Posterior vena cava (tissue), 2 donors: ENCODE measurements at regions of chr17 and their contacts with region 1.

Region 1: DNA sequence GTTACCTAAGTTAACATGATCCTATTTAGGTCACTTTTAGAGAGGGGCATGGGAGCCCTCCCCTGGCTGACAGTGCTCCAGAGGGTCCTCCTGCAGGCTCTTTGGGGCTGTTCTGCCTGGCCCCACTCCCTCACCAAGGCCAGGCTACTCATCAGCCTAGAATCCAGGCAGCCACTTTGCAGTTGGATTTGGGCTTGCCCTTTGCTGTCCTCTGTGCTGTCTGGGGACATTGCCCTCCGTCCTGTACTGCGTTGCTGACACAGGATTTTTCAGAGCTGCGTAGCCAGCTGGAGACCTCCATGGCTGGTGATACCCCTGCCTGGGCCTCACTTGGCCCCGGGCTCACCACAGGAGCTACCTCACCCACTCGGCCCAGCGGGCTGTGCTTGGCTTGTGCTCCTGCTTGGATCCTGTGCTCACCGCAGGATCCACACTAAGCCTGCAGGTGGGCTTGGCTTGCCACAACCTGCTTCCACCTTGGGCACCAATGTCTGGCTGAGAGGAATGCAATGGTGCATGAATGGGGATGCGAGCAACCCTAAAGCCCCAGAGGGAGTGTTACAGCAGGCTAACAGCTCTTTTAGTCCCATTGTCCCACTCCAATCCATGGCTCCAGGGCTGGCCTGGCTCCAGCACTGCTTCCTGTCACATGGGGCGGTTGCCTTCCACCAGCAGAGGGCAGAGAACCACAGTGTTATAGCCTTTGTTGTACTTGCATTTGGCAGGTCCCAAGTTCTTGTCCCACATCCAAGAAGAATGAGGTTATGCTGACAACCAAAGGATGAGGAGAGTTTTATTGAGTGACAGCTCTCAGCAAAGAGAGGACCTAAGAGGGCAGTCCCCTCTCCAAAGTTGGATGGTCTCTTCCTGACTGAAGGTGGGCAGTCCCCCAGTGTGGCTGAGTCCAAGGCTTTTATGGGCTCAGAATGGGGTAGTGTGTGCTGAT is 21.5 kb downstream of the CCL4 start:
- DNase-seq: no peak

Region 2: DNA sequence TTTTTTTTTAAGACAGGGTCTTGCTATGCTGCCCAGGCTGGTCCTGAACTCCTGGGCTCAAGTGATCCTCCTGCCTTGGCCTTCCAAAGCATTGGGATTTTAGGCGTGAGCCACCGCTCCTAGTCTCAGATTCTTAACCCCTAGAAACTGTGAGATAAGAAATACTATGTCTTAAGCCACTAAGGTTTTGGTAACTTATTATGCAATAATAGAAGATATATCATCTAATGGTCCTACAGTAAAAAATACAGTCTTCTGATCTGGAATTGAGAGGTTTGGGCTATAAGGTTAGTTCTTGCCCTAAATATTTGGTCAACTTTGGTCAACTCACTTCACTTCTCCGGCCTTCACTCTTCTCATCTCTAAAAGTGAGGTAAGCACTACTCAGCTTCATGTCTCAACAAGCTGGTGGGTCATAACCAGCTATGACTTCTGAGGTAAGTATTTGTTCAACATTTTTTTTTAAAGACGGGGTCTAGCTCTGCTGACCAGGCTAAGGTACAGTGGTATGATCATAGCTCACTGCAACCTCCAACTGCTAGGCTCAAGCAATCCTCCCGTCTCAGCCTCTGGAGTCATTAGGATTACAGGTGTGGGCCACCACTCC is 1020.2 kb before region 1 on chr17:
- intact Hi-C with region 1: no loop called
- DNase-seq: no peak

Region 3: DNA sequence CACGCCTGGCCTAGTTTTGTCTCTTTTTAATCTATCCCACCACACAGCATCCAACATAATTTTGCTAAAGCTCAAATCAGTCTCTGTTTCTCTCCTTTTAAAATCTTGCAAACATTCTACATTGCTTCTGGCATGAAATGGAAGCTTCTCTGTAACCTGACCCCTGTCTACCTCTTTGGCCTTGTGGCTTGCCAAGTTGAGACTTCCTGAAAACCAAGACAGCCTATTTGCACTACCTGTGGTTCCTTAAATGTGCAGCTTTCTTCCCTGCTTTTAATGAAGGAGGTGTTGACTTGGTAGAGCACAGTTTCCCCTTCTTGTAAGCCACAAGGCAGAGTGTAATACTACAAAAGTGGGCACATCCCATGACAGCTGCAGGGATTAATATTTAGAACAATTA is 29.2 kb before region 1 on chr17:
- intact Hi-C with region 1: loop called in 1 of 2 experiments (anchors 1 kb)
- DNase-seq: no peak